HepG2 (cell line): ENCODE measurements at regions of chr19 and their contacts with region 1.

Region 1: DNA sequence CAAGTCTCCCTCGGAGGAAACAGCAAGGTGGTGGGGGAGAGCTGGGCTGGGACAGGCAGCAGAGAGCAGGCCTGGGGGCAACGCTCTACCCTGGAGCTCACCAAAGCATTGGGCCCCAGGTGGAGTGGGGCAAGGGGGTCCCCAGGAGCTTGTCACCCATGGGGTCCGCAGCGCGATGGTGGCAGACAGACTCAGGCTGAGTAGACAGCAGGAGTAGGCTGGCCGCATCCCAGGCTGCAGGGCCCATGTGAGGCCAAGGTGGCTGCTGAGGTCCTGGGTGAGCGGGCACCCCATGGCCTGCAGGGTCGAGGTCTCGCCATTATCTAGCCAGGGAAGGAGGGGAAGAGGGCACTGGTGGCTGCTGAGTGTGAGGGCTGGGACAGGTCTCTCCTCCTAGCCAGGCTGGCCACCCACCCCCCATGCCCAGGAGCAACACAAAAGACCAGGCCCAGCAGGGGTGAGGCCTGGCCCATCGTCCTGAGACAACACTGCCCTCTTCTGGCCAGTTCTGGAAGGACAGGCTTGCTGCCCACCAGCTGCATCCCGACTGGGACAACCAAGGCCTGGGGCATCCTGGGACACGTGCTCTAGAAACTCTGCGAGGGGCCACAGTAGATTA is 33.1 kb downstream of the CEBPG start:
- DNase-seq: peak; percentile 56
- ATAC-seq: peak; percentile 31
- H3K4me3 ChIP-seq: no peak overlapping the region
- H3K27ac ChIP-seq: peak overlapping the region; percentile 10
- H3K4me1 ChIP-seq: peaks cover 53% of the 10 kb centered on the region
- H3K27me3 ChIP-seq: no peaks in the 10 kb centered on the region
- CTCF ChIP-seq: peak; percentile 99
- EP300 ChIP-seq: no peak
- POLR2A ChIP-seq: no peak
- RAD21 ChIP-seq: peak; percentile 98

Region 2: DNA sequence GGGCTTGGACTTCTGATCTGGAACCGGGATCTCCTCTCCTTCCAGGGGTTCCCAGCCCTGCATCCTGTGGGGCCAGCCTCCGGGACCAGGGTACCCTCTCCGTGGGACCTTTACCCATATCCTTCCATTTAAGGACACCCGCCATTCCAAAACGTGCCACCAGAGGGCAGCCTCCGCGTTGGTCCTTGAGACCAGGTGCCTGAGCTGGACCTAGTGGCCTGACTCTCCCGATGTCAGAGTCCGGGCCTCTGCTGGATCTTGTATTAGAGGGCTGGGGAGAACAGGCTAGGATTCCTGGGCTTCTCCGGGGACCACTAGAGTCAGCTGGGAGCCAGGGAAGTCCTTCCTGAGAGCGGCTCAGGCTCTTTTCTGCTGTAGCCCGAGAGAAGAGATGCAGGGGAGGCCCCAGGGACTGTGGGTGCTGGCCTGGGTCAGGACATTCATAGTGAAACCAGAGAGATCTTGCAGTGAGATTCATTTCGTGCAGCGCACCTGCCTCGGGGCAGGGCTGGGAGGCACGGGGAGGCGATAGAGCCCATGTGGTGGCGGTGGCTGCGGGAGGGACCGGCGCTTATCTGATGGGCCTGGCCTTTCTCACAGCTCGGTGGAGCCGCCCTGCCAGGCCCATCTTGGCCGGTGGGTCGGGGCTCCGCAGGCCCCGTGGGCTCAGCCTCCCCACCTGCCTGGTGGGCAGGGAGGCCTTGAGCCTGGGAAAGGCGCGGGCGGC is 171.2 kb before region 1 on chr19:
- CTCF ChIA-PET with region 1: interaction called, 20 read pairs
- POLR2A ChIA-PET with region 1: interaction called, 6 read pairs
- in situ Hi-C with region 1: loop called (anchors 5 kb)
- intact Hi-C with region 1: loop called (anchors 1 kb)
- DNase-seq: peak; percentile 78
- ATAC-seq: peak; percentile 86
- H3K4me3 ChIP-seq: peak overlapping the region in 2 of 3 experiments; percentile 37 to 53; a peak in 3 of 6 replicates
- H3K27ac ChIP-seq: no peak overlapping the region
- H3K4me1 ChIP-seq: peaks cover 44% of the 10 kb centered on the region
- H3K27me3 ChIP-seq: peaks cover 0 to 6% of the 10 kb centered on the region in 2 experiments; a peak in 1 of 5 replicates
- CTCF ChIP-seq: peak; percentile 95
- EP300 ChIP-seq: no peak
- POLR2A ChIP-seq: no peak
- RAD21 ChIP-seq: peak; percentile 89

Region 3: GRCh38 chr19:33248954-33249613 is 157.5 kb before region 1 on chr19:
- CTCF ChIA-PET with region 1: no interaction called
- POLR2A ChIA-PET with region 1: interaction called, 10 read pairs
- in situ Hi-C with region 1: no loop called
- intact Hi-C with region 1: no loop called
- DNase-seq: peak; percentile 53
- ATAC-seq: peak; percentile 59
- H3K4me3 ChIP-seq: peak overlapping the region; percentile 25 to 69 (median 27); a peak in 5 of 6 replicates
- H3K27ac ChIP-seq: peak overlapping the region; percentile 83
- H3K4me1 ChIP-seq: peaks cover 62% of the 10 kb centered on the region
- H3K27me3 ChIP-seq: peaks cover 3 to 4% of the 10 kb centered on the region in 2 experiments; a peak in 3 of 5 replicates
- CTCF ChIP-seq: peak; percentile 69
- EP300 ChIP-seq: no peak
- POLR2A ChIP-seq: no peak
- RAD21 ChIP-seq: peak; percentile 36; the same call in 1 of the 2 replicates

Region 4: DNA sequence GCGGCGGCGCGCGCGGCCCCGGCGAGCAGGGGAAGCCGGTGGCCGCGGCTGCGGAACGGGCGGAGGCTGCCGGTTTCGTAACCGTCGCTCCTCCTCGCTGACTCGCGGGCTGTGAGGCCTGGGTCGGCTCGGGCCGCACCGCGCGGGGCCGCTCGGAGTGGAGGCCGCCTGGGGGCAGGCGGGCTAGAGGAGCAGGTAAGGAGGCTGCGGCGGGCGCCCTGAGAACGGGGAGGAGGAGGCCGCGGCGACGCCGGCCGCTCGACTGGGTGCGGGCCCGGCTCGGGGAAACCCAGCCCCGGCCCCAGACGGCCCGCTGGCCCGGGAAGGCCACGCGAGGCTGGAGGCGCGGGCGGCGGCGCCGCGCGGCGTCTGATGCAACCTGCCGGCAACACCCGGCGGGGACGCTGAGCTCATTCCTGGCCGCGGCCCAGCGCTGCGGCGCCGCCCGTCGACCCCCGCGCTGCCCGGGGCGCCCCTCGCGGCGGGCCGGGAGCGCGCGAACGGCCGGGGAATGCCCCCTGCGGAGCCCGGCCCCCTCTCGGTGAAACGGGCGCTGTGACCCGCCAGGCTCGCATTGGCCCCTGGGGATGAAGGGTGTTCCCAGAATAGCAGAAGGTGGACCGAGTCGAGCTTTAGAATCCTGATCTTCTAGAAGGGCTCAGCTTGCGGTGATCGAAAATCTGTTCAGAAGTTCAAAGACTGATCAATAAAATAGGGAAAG is 32.8 kb before region 1 on chr19 and contains the start of gene CEBPG:
- CTCF ChIA-PET with region 1: no interaction called
- POLR2A ChIA-PET with region 1: interaction called, 25 read pairs
- in situ Hi-C with region 1: no loop called
- intact Hi-C with region 1: no loop called
- DNase-seq: no peak
- ATAC-seq: peak; percentile 49
- H3K4me3 ChIP-seq: peak within 1 kb of the TSS; percentile 74 to 90 (median 89)
- H3K27ac ChIP-seq: peak within 1 kb of the TSS; percentile 96
- H3K4me1 ChIP-seq: peaks cover 44% of the 10 kb centered on the region
- H3K27me3 ChIP-seq: peaks cover 0 to 3% of the 10 kb centered on the region in 2 experiments; a peak in 2 of 5 replicates
- CTCF ChIP-seq: no peak; the same call in 1 of the 2 replicates
- EP300 ChIP-seq: 0 out of 4 replicates have a peak, but pooled peaks of 1 of the 2 experiments have one; percentile 48
- POLR2A ChIP-seq: peak; percentile 66 to 83
- RAD21 ChIP-seq: peak; percentile 67; the same call in 1 of the 2 replicates
- total RNA-seq, gene CEBPG: 34.3 and 49.8 TPM in 2 replicates